ENCODE measurements at regions of chr3 and their contacts with region 1.

Region 1: GRCh38 chr3:152508705-152509104 is 240.0 kb downstream of the MBNL1 start:
- DNase-seq: peak; percentile 41 to 72 (median 65)
- H3K4me3 ChIP-seq: no peak overlapping the region
- H3K27ac ChIP-seq: no peak overlapping the region
- H3K4me1 ChIP-seq: peaks cover 0 to 10% (median 7%) of the 10 kb centered on the region in 4 experiments
- H3K27me3 ChIP-seq: no peaks in the 10 kb centered on the region

Region 2: GRCh38 chr3:152519376-152519775 is 10.7 kb after region 1 on chr3:
- CTCF ChIA-PET with region 1: interaction called, 66 read pairs
- POLR2A ChIA-PET with region 1: no interaction called
- DNase-seq: no peak
- H3K4me3 ChIP-seq: no peak overlapping the region
- H3K27ac ChIP-seq: no peak overlapping the region
- H3K4me1 ChIP-seq: no peaks in the 10 kb centered on the region
- H3K27me3 ChIP-seq: no peaks in the 10 kb centered on the region

Region 3: DNA sequence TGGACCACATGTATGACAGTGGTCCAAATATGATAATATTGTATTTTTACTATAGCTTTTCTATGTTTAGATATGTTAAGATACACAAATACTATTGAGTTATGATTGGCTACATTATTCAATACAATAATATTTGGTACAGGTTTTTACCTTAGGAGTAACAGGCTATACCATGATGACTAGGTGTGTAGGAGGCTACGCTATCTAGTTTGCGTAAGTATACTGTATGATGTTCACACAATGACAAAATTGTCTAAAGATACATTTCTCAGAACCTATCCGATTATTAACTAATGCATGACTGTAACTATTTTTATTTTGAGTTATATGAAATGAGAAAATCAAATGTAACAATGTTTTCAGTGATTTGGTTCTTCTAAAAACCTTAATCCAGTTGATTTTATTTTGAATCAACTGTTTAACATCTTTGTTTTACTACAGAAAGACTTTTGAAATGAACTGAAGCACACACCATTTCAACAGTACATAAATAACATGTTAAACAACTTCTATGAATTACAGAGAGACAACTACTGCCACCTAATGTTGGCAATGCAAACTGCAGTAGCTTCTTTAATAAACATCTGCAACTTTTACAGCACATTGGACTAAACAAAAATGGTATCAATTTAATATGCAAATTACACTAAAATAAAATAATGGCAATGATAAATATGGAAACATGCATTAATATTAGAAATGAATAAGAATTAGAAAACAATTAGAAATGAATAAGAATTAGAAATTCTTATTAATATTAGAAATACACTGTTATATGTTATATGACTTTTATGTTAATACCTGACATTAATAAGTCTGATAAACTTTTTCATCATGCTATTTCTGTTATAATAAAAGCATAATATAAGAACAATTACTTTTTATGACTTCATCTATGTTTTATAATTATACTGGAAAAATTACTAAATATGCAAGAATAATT is 15.8 kb after region 1 on chr3:
- CTCF ChIA-PET with region 1: interaction called, 66 read pairs
- POLR2A ChIA-PET with region 1: no interaction called
- DNase-seq: peak; percentile 54 to 81 (median 73)
- H3K4me3 ChIP-seq: no peak overlapping the region
- H3K27ac ChIP-seq: no peak overlapping the region
- H3K4me1 ChIP-seq: no peaks in the 10 kb centered on the region
- H3K27me3 ChIP-seq: no peaks in the 10 kb centered on the region

Region 4: DNA sequence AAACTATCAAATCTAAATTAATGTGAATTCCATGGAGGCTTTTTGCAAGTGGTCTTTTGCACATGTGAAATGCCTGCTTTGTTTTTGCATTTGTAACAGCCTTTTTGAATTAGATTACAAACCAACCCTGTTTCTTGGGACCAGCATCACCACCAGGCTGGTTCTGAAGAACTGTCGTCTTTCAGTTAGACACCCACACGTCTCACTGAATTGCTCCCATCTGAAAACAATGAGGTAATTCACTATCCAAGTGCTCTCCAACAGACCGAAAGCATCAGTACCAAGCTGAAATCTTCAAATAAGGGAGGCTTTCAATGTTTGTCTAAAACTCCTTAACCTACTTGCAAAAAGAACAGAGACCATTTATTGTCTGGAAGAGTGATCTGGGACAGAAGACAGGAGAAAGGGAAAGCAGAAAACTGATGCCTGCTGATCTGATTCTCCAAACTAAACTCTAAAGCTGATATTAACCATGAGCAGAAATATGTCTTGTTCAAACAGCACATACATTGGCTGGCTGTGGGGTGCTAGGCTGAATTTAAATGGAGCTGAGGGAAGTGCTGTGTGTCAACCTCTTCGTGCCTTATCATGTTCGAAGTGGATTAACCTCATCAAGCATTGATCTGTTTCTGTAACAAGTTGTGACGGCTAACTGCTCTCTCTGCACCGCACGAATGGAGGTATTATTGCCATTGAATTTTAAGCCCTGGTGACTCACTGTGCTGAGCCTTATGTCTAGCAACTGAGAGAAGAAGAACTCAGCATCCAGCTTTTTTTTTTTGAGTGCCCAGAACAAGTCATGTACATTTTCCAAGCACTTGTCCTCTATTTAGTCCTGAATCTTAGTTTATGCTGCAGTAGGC is 112.5 kb after region 1 on chr3:
- CTCF ChIA-PET with region 1: no interaction called
- POLR2A ChIA-PET with region 1: no interaction called
- DNase-seq: no peak
- H3K4me3 ChIP-seq: no peak overlapping the region
- H3K27ac ChIP-seq: no peak overlapping the region
- H3K4me1 ChIP-seq: peaks cover 0 to 10% (median 4%) of the 10 kb centered on the region in 4 experiments
- H3K27me3 ChIP-seq: no peaks in the 10 kb centered on the region